HepG2 (cell line): ENCODE measurements at regions of chr12 and their contacts with region 1.

Region 1: DNA sequence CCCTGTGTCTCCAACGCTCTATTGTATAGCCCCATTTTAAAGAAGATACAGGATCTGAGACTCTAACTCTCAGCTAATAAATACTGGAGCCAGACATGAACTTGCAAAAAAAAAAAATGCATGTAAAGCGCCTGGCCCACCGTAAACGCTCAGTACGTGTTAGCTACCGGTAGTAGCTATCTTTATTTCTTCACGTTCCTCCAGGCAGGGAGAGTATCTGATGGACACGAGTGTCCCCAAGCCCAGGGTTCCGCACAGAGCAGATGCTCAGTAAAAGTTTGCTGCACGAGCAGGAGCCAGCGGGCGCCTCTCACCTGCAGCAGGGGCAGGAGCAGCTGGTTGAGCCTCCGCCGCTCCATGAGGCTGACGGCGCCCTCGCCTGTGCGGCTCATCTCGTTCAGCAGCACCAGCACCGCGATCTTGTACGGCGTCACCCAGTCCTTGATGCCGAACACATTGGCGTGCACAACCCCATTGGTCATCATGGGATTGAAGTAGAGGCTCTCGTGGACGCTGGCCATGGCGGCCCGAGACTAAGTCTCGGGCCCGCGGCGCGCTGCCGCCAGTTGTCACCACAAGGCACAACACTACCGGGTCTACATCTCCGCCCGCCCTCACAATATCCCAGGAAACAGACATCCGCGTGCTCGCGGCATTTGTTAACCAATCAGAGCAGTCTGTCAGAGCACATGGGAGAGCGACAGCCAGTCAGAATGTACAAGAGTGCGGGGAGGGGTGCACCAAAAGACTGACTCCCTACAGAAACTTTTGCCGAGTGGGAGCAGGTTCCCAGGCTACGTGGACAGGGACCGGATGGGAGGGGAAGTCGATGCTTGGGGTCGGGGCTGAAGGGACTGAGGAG is at the start of gene ANAPC5:
- DNase-seq: peak; percentile 99
- ATAC-seq: peak; percentile 97
- H3K4me3 ChIP-seq: peak within 1 kb of the TSS; percentile 71 to 89 (median 81)
- H3K27ac ChIP-seq: peak within 1 kb of the TSS; percentile 93
- H3K4me1 ChIP-seq: peaks cover 45% of the 10 kb centered on the region
- H3K27me3 ChIP-seq: no peaks in the 10 kb centered on the region; a peak in 1 of 5 replicates
- CTCF ChIP-seq: peak; percentile 28; the same call in 1 of the 2 replicates
- EP300 ChIP-seq: peak; percentile 39 to 52; a peak in 1 of 4 replicates
- POLR2A ChIP-seq: peak; percentile 87 to 94
- RAD21 ChIP-seq: peak; percentile 23
- total RNA-seq, gene ANAPC5: 161 and 174 TPM in 2 replicates

Region 2: DNA sequence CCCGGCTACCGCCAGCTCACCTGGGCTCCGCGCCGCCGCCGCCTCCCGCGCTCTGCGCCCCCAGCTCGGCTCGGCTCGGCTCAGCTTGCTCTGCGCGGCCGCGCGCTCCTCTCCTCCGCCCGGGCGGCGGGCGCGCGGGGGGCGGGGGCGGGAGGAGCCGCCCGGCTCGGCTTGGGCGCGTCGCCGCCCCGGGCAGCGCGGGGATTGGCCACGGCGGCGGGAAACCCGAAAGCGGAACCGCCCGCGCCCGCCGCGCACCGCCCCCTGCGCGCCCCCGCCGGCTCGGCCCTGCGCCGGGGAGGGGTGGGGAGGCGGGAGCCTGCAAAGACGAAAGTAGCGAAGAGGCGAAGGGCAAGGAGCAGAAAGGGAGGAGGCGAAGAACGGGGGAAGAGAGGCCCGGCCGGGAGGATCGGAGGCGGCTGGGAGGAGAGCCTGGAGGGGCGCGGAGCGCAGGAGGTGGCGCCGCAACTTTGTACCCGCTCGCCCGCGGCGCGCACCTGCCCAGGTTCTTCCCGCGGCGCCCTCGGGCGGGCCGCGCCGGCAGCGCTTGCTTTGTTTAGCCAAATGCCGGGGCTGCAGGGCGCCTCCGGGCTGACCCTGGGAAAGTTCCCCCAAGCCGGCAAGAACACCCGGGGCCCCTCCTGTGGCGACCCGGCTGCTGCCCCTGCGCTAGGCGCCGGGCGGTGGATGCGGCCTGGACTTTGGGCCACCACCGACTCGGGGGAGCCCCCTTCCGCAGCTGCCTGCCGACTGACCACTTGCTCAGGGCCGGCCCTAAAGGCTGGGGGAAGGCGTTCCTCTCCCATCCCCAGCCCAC is 55.2 kb before region 1 on chr12 and contains the start of gene CAMKK2:
- CTCF ChIA-PET with region 1: no interaction called
- POLR2A ChIA-PET with region 1: interaction called, 13 read pairs
- in situ Hi-C with region 1: no loop called
- intact Hi-C with region 1: no loop called
- DNase-seq: peak; percentile 50
- ATAC-seq: peak; percentile 75
- H3K4me3 ChIP-seq: peak within 1 kb of the TSS; percentile 86 to 95 (median 93)
- H3K27ac ChIP-seq: peak within 1 kb of the TSS; percentile 96
- H3K4me1 ChIP-seq: peaks cover 33% of the 10 kb centered on the region
- H3K27me3 ChIP-seq: no peaks in the 10 kb centered on the region
- CTCF ChIP-seq: peak; percentile 36; the same call in 1 of the 2 replicates
- EP300 ChIP-seq: no peak
- POLR2A ChIP-seq: peak; percentile 27 to 61; a peak in 3 of 4 replicates
- RAD21 ChIP-seq: peak; percentile 70
- total RNA-seq, gene CAMKK2: 18.8 and 23.0 TPM in 2 replicates

Region 3: GRCh38 chr12:121376754-121377697 is 25.0 kb after region 1 on chr12:
- CTCF ChIA-PET with region 1: no interaction called
- POLR2A ChIA-PET with region 1: interaction called, 15 read pairs
- in situ Hi-C with region 1: no loop called
- intact Hi-C with region 1: no loop called
- DNase-seq: peak; percentile 69
- ATAC-seq: peak; percentile 77
- H3K4me3 ChIP-seq: peak overlapping the region in 1 of 3 experiments; percentile 34; a peak in 1 of 6 replicates
- H3K27ac ChIP-seq: peak overlapping the region; percentile 63
- H3K4me1 ChIP-seq: peaks cover 31% of the 10 kb centered on the region
- H3K27me3 ChIP-seq: no peaks in the 10 kb centered on the region
- CTCF ChIP-seq: no peak
- EP300 ChIP-seq: peak in 1 of 2 experiments; percentile 35; a peak in 2 of 4 replicates
- POLR2A ChIP-seq: no peak
- RAD21 ChIP-seq: no peak

Region 4: GRCh38 chr12:121399391-121400331 is 47.6 kb after region 1 on chr12 and contains the start of gene RNF34:
- CTCF ChIA-PET with region 1: no interaction called
- POLR2A ChIA-PET with region 1: interaction called, 37 read pairs
- in situ Hi-C with region 1: no loop called
- intact Hi-C with region 1: loop called (anchors 1 kb)
- DNase-seq: peak; percentile 97
- ATAC-seq: peak; percentile 96
- H3K4me3 ChIP-seq: peak within 1 kb of the TSS; percentile 71 to 84 (median 83)
- H3K27ac ChIP-seq: peak within 1 kb of the TSS; percentile 79
- H3K4me1 ChIP-seq: peaks cover 42% of the 10 kb centered on the region
- H3K27me3 ChIP-seq: no peaks in the 10 kb centered on the region; a peak in 1 of 5 replicates
- CTCF ChIP-seq: peak; percentile 24; the same call in 1 of the 2 replicates
- EP300 ChIP-seq: no peak
- POLR2A ChIP-seq: peak; percentile 94 to 98
- RAD21 ChIP-seq: peak; percentile 24; the same call in 1 of the 2 replicates
- total RNA-seq, gene RNF34: 53.2 and 68.2 TPM in 2 replicates

Region 5: DNA sequence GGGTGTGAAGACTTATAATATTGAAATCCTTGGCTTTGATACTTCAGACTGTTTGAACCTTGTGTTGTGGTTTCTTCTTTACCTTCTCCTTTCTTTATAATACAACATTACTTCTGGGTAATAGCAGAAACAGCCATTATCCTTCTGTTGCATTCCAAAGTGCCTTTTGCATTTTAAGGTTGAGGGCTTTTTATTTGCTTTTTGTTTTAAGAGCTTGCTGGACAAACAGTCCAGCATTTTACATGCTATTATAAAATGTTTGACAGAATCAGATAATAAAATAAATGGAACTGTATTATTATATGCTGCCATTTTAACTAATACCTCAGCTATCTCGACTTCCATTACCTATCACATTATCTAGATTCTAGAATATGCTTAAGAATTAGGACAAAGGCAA is 61.9 kb after region 1 on chr12:
- CTCF ChIA-PET with region 1: no interaction called
- POLR2A ChIA-PET with region 1: no interaction called
- in situ Hi-C with region 1: no loop called
- intact Hi-C with region 1: no loop called
- DNase-seq: no peak
- ATAC-seq: no peak
- H3K4me3 ChIP-seq: no peak overlapping the region
- H3K27ac ChIP-seq: no peak overlapping the region
- H3K4me1 ChIP-seq: no peaks in the 10 kb centered on the region
- H3K27me3 ChIP-seq: no peaks in the 10 kb centered on the region
- CTCF ChIP-seq: no peak
- EP300 ChIP-seq: no peak
- POLR2A ChIP-seq: no peak
- RAD21 ChIP-seq: no peak

Region 6: GRCh38 chr12:121443193-121443870 is 91.3 kb after region 1 on chr12:
- CTCF ChIA-PET with region 1: no interaction called
- POLR2A ChIA-PET with region 1: interaction called, 6 read pairs
- in situ Hi-C with region 1: loop called (anchors 5 kb)
- intact Hi-C with region 1: loop called (anchors 1 kb)
- DNase-seq: peak; percentile 45
- ATAC-seq: peak; percentile 93
- H3K4me3 ChIP-seq: no peak overlapping the region
- H3K27ac ChIP-seq: no peak overlapping the region
- H3K4me1 ChIP-seq: peaks cover 7% of the 10 kb centered on the region; the same call in 1 of the 2 replicates
- H3K27me3 ChIP-seq: no peaks in the 10 kb centered on the region
- CTCF ChIP-seq: peak; percentile 96
- EP300 ChIP-seq: no peak
- POLR2A ChIP-seq: no peak
- RAD21 ChIP-seq: peak; percentile 73